ENCODE measurements at regions of chr19 and their contacts with region 1.

Region 1: GRCh38 chr19:13774217-13775191 is at the start of gene C19orf53:
- DNase-seq: peak; percentile 92
- H3K4me3 Mint-ChIP-seq: peak within 1 kb of the TSS; percentile 98
- H3K27ac Mint-ChIP-seq: peak within 1 kb of the TSS; percentile 94
- H3K4me1 Mint-ChIP-seq: peaks cover 19% of the 10 kb centered on the region
- H3K27me3 Mint-ChIP-seq: no peaks in the 10 kb centered on the region
- total RNA-seq, gene C19orf53: 116 to 132 TPM

Region 2: GRCh38 chr19:13425151-13425550 is 349.4 kb before region 1 on chr19:
- CTCF ChIA-PET with region 1: no interaction called
- intact Hi-C with region 1: no loop called
- DNase-seq: no peak
- H3K4me3 Mint-ChIP-seq: no peak overlapping the region
- H3K27ac Mint-ChIP-seq: no peak overlapping the region
- H3K4me1 Mint-ChIP-seq: no peaks in the 10 kb centered on the region
- H3K27me3 Mint-ChIP-seq: peaks cover 16% of the 10 kb centered on the region

Region 3: DNA sequence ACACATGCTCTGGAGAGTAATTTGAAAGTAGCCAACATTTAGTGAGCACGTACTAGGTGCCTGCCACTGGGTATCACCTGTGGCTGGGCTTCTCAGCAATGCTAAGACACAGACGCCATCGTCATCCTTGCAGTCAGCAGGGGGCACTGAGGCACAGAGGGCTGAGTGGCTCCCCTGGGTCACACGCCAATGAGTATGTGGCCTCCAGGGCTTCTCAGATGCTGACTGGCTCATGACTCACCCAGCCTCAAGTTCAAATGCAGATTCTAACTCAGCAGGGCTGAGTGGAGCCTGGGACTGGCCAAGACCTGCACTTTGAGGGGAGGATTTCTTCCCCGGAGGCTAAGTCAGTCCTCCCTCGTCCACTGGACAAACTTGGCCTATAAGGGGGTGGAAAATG is 153.1 kb before region 1 on chr19:
- CTCF ChIA-PET with region 1: no interaction called
- intact Hi-C with region 1: loop called (anchors 1 kb)
- DNase-seq: peak; percentile 85
- H3K4me3 Mint-ChIP-seq: no peak overlapping the region
- H3K27ac Mint-ChIP-seq: no peak overlapping the region
- H3K4me1 Mint-ChIP-seq: peaks cover 2% of the 10 kb centered on the region
- H3K27me3 Mint-ChIP-seq: peaks cover 49% of the 10 kb centered on the region

Region 4: GRCh38 chr19:13747098-13747453 is 27.4 kb before region 1 on chr19:
- CTCF ChIA-PET with region 1: interaction called, 5 read pairs
- intact Hi-C with region 1: loop called (anchors 1 kb)
- DNase-seq: no peak
- H3K4me3 Mint-ChIP-seq: peak overlapping the region; percentile 84
- H3K27ac Mint-ChIP-seq: no peak overlapping the region
- H3K4me1 Mint-ChIP-seq: peaks cover 35% of the 10 kb centered on the region
- H3K27me3 Mint-ChIP-seq: no peaks in the 10 kb centered on the region

Region 5: GRCh38 chr19:13784731-13785452 is 10.4 kb after region 1 on chr19:
- CTCF ChIA-PET with region 1: interaction called, 15 read pairs
- intact Hi-C with region 1: no loop called
- DNase-seq: peak; percentile 87
- H3K4me3 Mint-ChIP-seq: peak overlapping the region; percentile 54
- H3K27ac Mint-ChIP-seq: peak overlapping the region; percentile 59
- H3K4me1 Mint-ChIP-seq: peaks cover 55% of the 10 kb centered on the region
- H3K27me3 Mint-ChIP-seq: no peaks in the 10 kb centered on the region

Region 6: DNA sequence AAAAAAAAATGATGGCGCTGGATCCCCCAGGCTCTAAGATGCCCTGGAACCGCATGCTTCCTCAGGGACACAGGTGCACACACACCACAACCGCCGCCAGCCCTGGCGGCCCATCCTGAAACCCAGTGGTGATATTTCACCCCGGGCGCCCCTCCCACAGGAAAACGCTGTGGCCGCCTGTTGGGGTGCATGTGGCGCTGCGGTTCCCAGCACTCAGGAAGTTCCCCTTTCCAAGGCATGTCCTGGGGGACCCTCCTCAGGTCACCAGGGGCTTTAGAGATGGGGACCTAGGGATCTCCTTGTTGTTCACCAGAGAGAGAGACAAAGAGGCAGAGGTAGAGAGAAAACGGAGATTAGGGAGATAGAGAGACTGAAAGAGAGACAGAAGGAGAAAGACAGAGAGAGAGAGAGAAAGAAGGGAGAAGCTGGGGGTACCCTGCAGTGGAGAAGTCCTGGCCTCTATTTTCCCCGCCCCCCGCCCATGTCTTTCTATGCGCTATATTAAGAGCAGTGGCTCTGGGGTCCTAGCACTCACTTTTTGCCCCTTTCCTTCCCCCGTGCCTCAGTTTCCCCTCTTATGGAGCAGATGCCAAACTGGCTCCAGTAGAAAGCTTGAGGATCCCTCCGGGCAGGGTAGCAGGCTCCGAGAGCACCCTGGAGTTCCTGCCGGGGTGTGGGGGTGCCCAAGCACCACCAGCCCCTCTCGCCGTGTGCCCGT is 1001.5 kb after region 1 on chr19:
- CTCF ChIA-PET with region 1: no interaction called
- intact Hi-C with region 1: no loop called
- DNase-seq: no peak
- H3K4me3 Mint-ChIP-seq: no peak overlapping the region
- H3K27ac Mint-ChIP-seq: no peak overlapping the region
- H3K4me1 Mint-ChIP-seq: peaks cover 7% of the 10 kb centered on the region
- H3K27me3 Mint-ChIP-seq: peaks cover 26% of the 10 kb centered on the region

Measured in activated naive CD4-positive, alpha-beta T cell treated with anti-CD3 and anti-CD28 coated beads for 36 hours (primary cell).